Lower lobe of right lung (tissue), 2 donors: ENCODE measurements at regions of chr11 and their contacts with region 1.

Region 1: GRCh38 chr11:46889689-46890475 is 28.5 kb downstream of the LRP4 start:
- DNase-seq: no peak
- ATAC-seq: peak; percentile 91 to 92
- H3K4me3 ChIP-seq: no peak overlapping the region
- H3K27ac ChIP-seq: no peak overlapping the region
- H3K4me1 ChIP-seq: no peaks in the 10 kb centered on the region
- H3K27me3 ChIP-seq: no peaks in the 10 kb centered on the region
- CTCF ChIP-seq: peak; percentile 79

Region 2: GRCh38 chr11:47028195-47029093 is 138.6 kb after region 1 on chr11:
- intact Hi-C with region 1: no loop called
- DNase-seq: no peak
- ATAC-seq: no peak
- H3K4me3 ChIP-seq: no peak overlapping the region
- H3K27ac ChIP-seq: no peak overlapping the region
- H3K4me1 ChIP-seq: no peaks in the 10 kb centered on the region
- H3K27me3 ChIP-seq: no peaks in the 10 kb centered on the region
- CTCF ChIP-seq: no peak

Region 3: GRCh38 chr11:47152953-47153950 is 263.4 kb after region 1 on chr11:
- intact Hi-C with region 1: loop called (anchors 5 kb)
- DNase-seq: peak; percentile 72
- ATAC-seq: peak; percentile 84 to 87
- H3K4me3 ChIP-seq: no peak overlapping the region
- H3K27ac ChIP-seq: peak overlapping the region; percentile 37
- H3K4me1 ChIP-seq: peaks cover 11% of the 10 kb centered on the region
- H3K27me3 ChIP-seq: no peaks in the 10 kb centered on the region
- CTCF ChIP-seq: peak; percentile 95